Heart right ventricle (tissue), 16 donors: ENCODE measurements at regions of chr11 and their contacts with region 1.

Region 1: GRCh38 chr11:115893694-115894099 is 389.5 kb upstream of the CADM1 start:
- DNase-seq: no peak
- ATAC-seq: no peak
- H3K4me3 ChIP-seq: no peak overlapping the region
- H3K27ac ChIP-seq: no peak overlapping the region
- H3K4me1 ChIP-seq: no peaks in the 10 kb centered on the region
- H3K27me3 ChIP-seq: peaks cover 0 to 3% (median 0%) of the 10 kb centered on the region in 7 donors
- CTCF ChIP-seq: no peak

Region 2: DNA sequence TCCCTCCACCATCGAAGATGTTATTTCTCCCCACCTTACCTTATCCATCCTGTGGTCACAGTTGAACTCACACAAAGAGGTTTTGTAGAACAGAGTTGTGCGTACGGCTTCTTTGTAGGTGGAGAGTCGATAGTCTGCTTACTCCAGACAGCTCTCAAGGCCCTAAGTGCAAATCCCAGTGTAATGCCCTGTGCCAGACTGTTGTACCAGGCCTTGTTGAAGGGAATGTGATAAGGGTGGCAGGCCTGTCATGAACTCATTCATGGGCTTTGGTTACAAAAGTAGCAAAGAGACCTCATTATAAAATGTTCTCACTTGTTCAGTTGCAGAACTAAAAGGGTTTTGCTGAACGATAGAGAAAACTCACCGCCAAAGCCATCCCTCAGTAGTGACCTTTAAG is 100.8 kb before region 1 on chr11:
- intact Hi-C with region 1: loop called in 1 of 10 experiments (anchors 10 kb)
- DNase-seq: no peak
- ATAC-seq: peak in 4 of 8 donors; percentile 37 to 69 (median 56)
- H3K4me3 ChIP-seq: no peak overlapping the region
- H3K27ac ChIP-seq: no peak overlapping the region
- H3K4me1 ChIP-seq: peaks cover 0 to 3% (median 0%) of the 10 kb centered on the region in 9 donors
- H3K27me3 ChIP-seq: peaks cover 0 to 6% (median 0%) of the 10 kb centered on the region in 7 donors
- CTCF ChIP-seq: no peak

Region 3: DNA sequence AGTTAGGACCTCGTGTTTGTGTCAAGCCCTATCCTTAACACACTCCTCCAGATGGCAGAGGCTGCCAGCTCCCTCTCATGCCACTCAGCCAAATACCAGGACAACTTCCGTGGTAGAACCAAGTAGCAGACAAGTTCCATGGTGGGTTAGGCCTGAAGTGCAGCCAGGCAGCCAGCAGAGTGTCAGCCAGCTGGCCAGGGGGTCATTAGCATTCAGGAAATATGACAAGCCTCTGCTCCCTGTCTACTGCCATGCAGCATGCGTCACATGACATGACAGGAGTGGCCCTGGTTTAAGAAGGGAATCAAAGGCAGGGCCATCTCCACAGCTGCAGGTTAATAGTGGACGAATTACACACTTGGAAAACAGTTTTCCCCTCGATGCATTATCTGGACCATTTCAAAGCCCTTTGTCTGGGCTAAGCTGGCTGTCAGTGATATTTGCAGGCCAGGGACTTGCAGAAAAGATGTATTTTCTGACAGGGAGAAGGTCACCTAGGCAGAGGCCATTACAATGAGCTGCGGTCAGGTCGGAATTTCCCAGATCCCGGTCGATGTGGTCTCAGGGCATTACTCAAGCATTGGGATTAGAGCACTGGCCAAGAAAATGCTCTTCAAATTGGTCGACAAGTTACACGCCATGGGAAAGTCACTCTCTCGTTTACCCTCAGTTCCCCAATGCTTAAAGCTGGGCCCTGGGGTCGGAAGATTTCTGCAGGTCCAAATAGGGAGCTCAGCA is 72.2 kb after region 1 on chr11:
- intact Hi-C with region 1: no loop called
- DNase-seq: peak in 1 of 2 donors; percentile 37
- ATAC-seq: peak in 7 of 8 donors; percentile 51 to 90 (median 76)
- H3K4me3 ChIP-seq: no peak overlapping the region
- H3K27ac ChIP-seq: peak overlapping the region in 1 of 10 donors; percentile 18
- H3K4me1 ChIP-seq: peaks cover 3 to 39% (median 13%) of the 10 kb centered on the region in 9 donors
- H3K27me3 ChIP-seq: peaks cover 0 to 8% (median 0%) of the 10 kb centered on the region in 7 donors
- CTCF ChIP-seq: no peak